Mammary epithelial cell (primary cell): ENCODE measurements at regions of chr10 and their contacts with region 1.

Region 1: DNA sequence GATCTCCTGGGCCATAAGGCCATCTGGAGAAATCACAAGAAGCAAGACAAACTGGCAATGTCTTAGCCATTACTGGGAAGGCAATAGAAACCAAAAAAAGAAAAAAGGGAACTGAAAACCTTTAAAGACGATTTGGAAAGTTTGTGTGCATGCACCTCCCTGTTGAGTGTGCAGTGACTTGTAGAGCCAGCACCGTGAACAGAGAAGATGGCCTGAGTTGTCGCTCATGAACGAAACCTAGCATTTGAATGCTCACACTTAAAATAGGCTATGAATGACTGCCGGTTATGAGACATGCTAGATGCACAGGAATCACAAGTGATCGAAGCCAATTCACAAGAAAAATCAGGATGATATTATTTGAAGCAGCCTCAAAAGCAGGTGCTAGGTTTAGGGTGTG is 151.3 kb upstream of the ADO start:
- DNase-seq: no peak
- H3K4me3 ChIP-seq: no peak overlapping the region
- H3K27ac ChIP-seq: no peak overlapping the region
- H3K4me1 ChIP-seq: peaks cover 25% of the 10 kb centered on the region
- H3K27me3 ChIP-seq: no peaks in the 10 kb centered on the region
- CTCF ChIP-seq: no peak

Region 2: DNA sequence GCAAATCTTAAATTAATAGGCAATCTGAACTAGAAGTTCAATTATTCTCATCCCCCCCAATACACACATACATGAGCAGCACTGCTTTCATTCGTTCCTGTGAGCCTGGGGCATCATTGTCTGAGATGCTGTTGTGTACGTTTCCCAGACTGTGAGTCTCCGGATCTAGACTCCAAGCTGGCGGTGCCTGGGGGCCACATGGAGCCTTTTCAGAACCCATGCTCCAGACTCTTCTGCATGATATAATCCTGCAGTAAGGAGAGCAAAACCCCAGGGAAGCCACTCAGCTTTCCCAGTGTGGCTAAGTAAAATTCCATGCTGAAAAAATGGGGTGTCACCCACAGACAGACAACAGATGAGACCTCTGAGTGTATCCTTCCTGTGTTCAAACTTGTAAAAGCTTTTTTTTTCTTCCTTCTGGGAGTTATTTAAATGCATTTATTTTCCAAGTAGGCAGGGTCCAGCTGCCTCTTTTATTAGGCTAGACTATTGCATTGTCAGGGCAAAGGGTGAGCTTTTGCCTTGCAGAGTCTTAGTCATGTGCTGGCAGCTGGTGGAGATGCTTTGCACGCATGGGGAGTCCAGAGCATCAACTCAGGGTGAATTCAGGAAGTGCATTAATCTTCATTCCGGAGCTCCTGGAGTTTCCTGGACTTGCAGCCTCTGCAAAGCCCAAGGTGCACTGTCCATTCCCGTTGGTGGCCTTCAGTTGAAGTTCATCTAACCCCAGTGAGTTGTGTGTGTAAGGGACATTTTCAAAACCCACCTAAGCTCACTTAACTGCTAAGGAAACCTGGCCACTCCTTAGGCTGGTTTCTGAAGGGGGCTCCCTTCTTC is 34.5 kb before region 1 on chr10:
- CTCF ChIA-PET with region 1: no interaction called
- dilution Hi-C with region 1: loop called (anchors 5 kb)
- in situ Hi-C with region 1: no loop called
- intact Hi-C with region 1: no loop called
- DNase-seq: no peak
- H3K4me3 ChIP-seq: no peak overlapping the region
- H3K27ac ChIP-seq: no peak overlapping the region
- H3K4me1 ChIP-seq: peaks cover 7% of the 10 kb centered on the region
- H3K27me3 ChIP-seq: no peaks in the 10 kb centered on the region
- CTCF ChIP-seq: no peak